ENCODE measurements at regions of chr19 and their contacts with region 1.

Region 1: DNA sequence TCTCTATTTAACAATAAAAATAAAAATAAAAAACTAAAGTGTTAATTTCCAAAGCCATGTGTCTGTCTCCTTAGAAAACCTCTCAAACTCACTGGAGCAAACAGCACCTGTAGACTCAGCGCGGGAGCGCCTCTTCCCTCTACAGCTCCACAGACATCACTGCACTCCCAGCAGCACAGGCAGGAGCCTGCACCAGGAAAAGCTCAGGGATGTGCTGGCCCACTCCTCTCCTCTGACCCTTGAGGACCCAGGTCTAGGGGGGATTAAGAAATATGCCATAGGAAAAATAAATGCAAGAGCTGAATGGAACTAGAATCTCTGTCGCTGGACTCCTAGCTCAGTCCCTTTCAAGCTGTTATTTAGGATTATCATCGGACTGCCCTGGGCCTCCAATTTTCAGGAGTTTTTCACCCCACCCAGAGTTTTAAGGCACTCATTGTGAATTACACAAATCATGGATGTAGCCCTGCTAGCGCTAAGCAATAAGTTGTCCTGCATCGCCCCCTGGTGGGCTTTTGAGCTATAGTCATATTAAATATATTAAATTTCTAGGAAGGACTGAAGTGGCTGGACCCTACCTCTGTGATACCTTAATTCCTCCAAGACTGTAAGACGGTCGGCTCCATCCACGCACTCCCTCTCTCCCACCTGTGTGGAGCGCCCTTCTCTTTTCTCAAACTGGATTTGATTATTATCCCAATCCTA is 333.9 kb downstream of the UQCRFS1 start:
- DNase-seq: peak; percentile 71
- ATAC-seq: peak; percentile 25 to 47

Region 2: GRCh38 chr19:28466107-28467045 is 412.6 kb before region 1 on chr19:
- intact Hi-C with region 1: loop called (anchors 2 to 5 kb)
- DNase-seq: peak; percentile 58
- ATAC-seq: peak in 1 of 2 donors; percentile 38

Region 3: DNA sequence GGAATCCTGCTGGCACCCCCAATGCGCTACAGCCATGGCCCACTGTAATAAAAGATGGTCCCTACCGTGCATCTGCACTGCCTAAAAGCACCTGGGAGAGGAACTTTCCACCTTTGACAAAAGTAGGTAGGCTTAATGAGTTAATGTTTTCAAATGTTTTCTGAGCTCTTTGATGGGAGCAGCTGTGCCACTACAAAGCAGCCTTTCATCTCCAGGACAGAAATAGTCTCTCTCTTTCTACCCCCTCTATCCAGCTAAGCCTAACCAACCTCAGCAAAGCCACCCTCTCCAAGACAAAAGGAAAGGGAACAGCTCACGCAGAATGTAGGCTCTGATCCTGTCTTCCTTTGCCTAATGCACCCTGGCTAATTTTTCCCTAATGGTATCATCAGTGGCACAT is 226.2 kb before region 1 on chr19:
- intact Hi-C with region 1: no loop called
- DNase-seq: no peak
- ATAC-seq: no peak

Region 4: GRCh38 chr19:28737021-28737895 is 141.8 kb before region 1 on chr19:
- intact Hi-C with region 1: loop called (anchors 1 to 5 kb)
- DNase-seq: no peak
- ATAC-seq: peak; percentile 52 to 68

Region 5: GRCh38 chr19:28793391-28794168 is 85.4 kb before region 1 on chr19:
- intact Hi-C with region 1: no loop called
- DNase-seq: no peak
- ATAC-seq: peak; percentile 73 to 79

Region 6: GRCh38 chr19:28940751-28941500 is 61.9 kb after region 1 on chr19:
- intact Hi-C with region 1: no loop called
- DNase-seq: no peak
- ATAC-seq: peak; percentile 81 to 99

Region 7: DNA sequence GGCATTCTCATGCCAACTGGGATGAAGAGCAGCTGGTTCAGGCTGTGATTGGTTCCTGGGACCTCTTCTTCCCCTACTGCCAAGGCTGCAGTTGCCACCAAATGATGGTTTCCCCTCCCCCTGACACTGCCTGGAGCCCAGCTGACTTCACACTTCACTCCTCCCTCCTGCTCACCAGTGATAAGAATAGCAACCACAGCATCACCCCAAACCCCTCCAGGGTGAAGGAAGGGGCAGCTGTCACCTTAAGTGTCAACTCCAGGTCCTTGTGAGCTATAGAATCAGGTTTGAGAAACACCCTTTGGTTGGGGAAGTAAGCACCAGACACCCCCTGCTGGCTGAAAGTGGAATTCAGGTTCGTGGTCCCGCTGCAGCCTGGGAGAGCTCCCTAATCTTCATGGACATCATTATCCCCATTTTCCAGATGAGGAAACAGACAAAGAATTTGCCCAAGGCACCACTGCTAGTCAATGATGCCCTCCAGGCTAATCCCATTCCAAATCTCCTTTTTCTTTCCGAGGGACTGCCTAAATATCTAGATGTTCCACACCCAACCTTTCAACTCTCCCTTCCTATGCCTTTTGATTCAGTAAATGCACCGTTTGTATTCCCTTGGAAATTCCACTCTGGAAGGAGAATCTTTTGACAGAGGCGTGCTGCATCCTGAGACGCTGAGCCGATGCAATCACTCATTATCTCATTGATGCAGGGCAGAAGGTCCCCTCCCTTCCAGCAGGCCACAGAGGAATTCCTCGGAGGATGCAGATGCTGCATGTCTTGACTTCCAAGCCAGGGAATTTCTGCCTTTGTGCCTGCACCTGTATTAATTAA is 384.5 kb after region 1 on chr19:
- intact Hi-C with region 1: loop called in 1 of 2 experiments (anchors 10 kb)
- DNase-seq: peak; percentile 34
- ATAC-seq: no peak